Esophagus squamous epithelium (tissue), 5 donors: ENCODE measurements at regions of chr21 and their contacts with region 1.

Region 1: DNA sequence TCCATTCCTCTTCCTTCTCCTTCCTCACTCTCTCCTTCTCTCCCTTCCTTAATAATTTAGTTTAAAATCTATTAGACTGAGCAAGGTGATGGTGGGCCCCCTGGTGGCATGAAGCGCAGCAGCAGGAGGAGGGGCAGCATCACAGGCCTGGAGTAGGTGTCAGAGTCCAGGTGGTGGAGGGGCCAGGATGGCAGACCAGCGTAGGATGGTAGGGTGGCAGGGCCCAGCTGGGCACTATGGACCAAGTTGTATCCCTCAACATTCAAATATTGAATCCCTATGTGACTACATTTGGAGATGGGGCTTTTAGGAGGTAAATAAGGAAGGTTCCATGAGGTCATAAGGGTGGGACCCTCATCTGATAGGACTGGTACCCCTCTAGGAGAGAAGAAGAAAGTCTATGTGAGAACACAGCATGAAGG is 61.0 kb downstream of the WDR4 start:
- DNase-seq: no peak
- H3K4me3 ChIP-seq: no peak overlapping the region
- H3K27ac ChIP-seq: no peak overlapping the region
- H3K4me1 ChIP-seq: peaks cover 0 to 7% (median 0%) of the 10 kb centered on the region in 3 donors
- H3K27me3 ChIP-seq: peaks cover 0 to 43% (median 2%) of the 10 kb centered on the region in 4 donors
- CTCF ChIP-seq: peak; percentile 41 to 96 (median 94)
- POLR2A ChIP-seq: no peak

Region 2: GRCh38 chr21:42593007-42593806 is 225.1 kb before region 1 on chr21:
- intact Hi-C with region 1: loop called (anchors 5 kb)
- DNase-seq: no peak
- H3K4me3 ChIP-seq: peak overlapping the region in 2 of 4 donors; percentile 8 to 47
- H3K27ac ChIP-seq: no peak overlapping the region
- H3K4me1 ChIP-seq: peaks cover 6 to 10% (median 7%) of the 10 kb centered on the region in 3 donors
- H3K27me3 ChIP-seq: peaks cover 0 to 16% (median 0%) of the 10 kb centered on the region in 4 donors
- CTCF ChIP-seq: peak; percentile 35 to 79 (median 68)
- POLR2A ChIP-seq: no peak

Region 3: GRCh38 chr21:42724226-42724920 is 94.0 kb before region 1 on chr21:
- intact Hi-C with region 1: no loop called
- DNase-seq: no peak
- H3K4me3 ChIP-seq: no peak overlapping the region
- H3K27ac ChIP-seq: peak overlapping the region in 2 of 4 donors; percentile 53 to 59
- H3K4me1 ChIP-seq: peaks cover 0 to 36% (median 0%) of the 10 kb centered on the region in 3 donors
- H3K27me3 ChIP-seq: no peaks in the 10 kb centered on the region
- CTCF ChIP-seq: no peak
- POLR2A ChIP-seq: no peak